ENCODE measurements at regions of chr12 and their contacts with region 1.

Region 1: GRCh38 chr12:121144416-121144914 is 11.8 kb downstream of the P2RX7 start:
- DNase-seq: no peak
- H3K4me3 Mint-ChIP-seq: peak overlapping the region; percentile 58
- H3K27ac Mint-ChIP-seq: peak overlapping the region; percentile 81
- H3K4me1 Mint-ChIP-seq: peaks cover 27% of the 10 kb centered on the region
- H3K27me3 Mint-ChIP-seq: no peaks in the 10 kb centered on the region

Region 2: GRCh38 chr12:121181181-121181580 is 36.7 kb after region 1 on chr12:
- intact Hi-C with region 1: loop called (anchors 5 kb)
- DNase-seq: no peak
- H3K4me3 Mint-ChIP-seq: no peak overlapping the region
- H3K27ac Mint-ChIP-seq: no peak overlapping the region
- H3K4me1 Mint-ChIP-seq: peaks cover 5% of the 10 kb centered on the region
- H3K27me3 Mint-ChIP-seq: no peaks in the 10 kb centered on the region